B cell (primary cell): ENCODE measurements at regions of chr12 and their contacts with region 1.

Region 1: DNA sequence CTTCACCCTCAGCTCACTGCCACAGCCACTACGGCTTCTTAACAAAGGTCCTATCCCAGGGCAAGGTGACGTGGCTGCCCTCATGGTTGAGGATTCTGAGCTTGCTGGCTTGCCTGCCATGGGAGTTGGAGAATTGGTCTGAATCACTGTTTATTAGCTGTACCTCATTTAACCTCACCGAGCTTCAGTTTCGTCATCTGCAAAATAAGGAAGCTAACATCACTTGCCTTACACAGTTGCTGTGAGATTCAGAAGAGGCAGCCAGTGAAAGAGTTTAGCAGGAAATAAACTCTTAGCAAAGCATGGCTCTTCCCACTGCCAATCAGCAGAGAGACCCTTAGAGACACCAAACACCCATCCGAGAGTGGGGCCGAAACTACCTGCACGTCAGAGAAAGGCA is 90.1 kb upstream of the KCNA1 start:
- DNase-seq: peak; percentile 70
- ATAC-seq: peak; percentile 84
- H3K4me3 ChIP-seq: no peak overlapping the region
- H3K4me3 Mint-ChIP-seq: peak overlapping the region; percentile 67
- H3K27ac ChIP-seq: peak overlapping the region; percentile 42 to 65
- H3K27ac Mint-ChIP-seq: peak overlapping the region; percentile 86
- H3K4me1 ChIP-seq: peaks cover 54 to 64% of the 10 kb centered on the region in 2 donors
- H3K4me1 Mint-ChIP-seq: peaks cover 65% of the 10 kb centered on the region
- H3K27me3 ChIP-seq: peaks cover 0 to 7% (median 0%) of the 10 kb centered on the region in 4 experiments
- H3K27me3 Mint-ChIP-seq: peaks cover 11% of the 10 kb centered on the region
- CTCF ChIP-seq: no peak

Region 2: GRCh38 chr12:4849115-4849541 is 29.5 kb after region 1 on chr12:
- CTCF ChIA-PET with region 1: interaction called, 12 read pairs
- POLR2A ChIA-PET with region 1: no interaction called
- intact Hi-C with region 1: no loop called
- DNase-seq: peak; percentile 61
- ATAC-seq: peak; percentile 49
- H3K4me3 ChIP-seq: no peak overlapping the region
- H3K4me3 Mint-ChIP-seq: no peak overlapping the region
- H3K27ac ChIP-seq: no peak overlapping the region
- H3K27ac Mint-ChIP-seq: no peak overlapping the region
- H3K4me1 ChIP-seq: peaks cover 0 to 2% of the 10 kb centered on the region in 2 donors
- H3K4me1 Mint-ChIP-seq: peaks cover 3% of the 10 kb centered on the region
- H3K27me3 ChIP-seq: no peaks in the 10 kb centered on the region
- H3K27me3 Mint-ChIP-seq: peaks cover 3% of the 10 kb centered on the region
- CTCF ChIP-seq: peak; percentile 88